Mammary epithelial cell (primary cell): ENCODE measurements at regions of chr11 and their contacts with region 1.

Region 1: GRCh38 chr11:128905345-128906184 is 14.4 kb downstream of the KCNJ5 start:
- DNase-seq: peak; percentile 62
- H3K4me3 ChIP-seq: peak overlapping the region; percentile 33 to 60 (median 55)
- H3K27ac ChIP-seq: no peak overlapping the region
- H3K4me1 ChIP-seq: peaks cover 68% of the 10 kb centered on the region
- H3K27me3 ChIP-seq: no peaks in the 10 kb centered on the region
- CTCF ChIP-seq: peak; percentile 47 to 60

Region 2: GRCh38 chr11:128522055-128522942 is 383.3 kb before region 1 on chr11:
- CTCF ChIA-PET with region 1: no interaction called
- dilution Hi-C with region 1: no loop called
- in situ Hi-C with region 1: no loop called
- intact Hi-C with region 1: no loop called
- DNase-seq: peak; percentile 99
- H3K4me3 ChIP-seq: peak overlapping the region; percentile 85 to 95 (median 87)
- H3K27ac ChIP-seq: peak overlapping the region; percentile 96
- H3K4me1 ChIP-seq: peaks cover 55% of the 10 kb centered on the region
- H3K27me3 ChIP-seq: no peaks in the 10 kb centered on the region
- CTCF ChIP-seq: no peak

Region 3: GRCh38 chr11:128859563-128860441 is 45.8 kb before region 1 on chr11:
- CTCF ChIA-PET with region 1: no interaction called
- dilution Hi-C with region 1: no loop called
- in situ Hi-C with region 1: no loop called
- intact Hi-C with region 1: no loop called
- DNase-seq: peak; percentile 31
- H3K4me3 ChIP-seq: no peak overlapping the region
- H3K27ac ChIP-seq: no peak overlapping the region
- H3K4me1 ChIP-seq: peaks cover 12% of the 10 kb centered on the region
- H3K27me3 ChIP-seq: no peaks in the 10 kb centered on the region
- CTCF ChIP-seq: peak; percentile 78 to 80

Region 4: DNA sequence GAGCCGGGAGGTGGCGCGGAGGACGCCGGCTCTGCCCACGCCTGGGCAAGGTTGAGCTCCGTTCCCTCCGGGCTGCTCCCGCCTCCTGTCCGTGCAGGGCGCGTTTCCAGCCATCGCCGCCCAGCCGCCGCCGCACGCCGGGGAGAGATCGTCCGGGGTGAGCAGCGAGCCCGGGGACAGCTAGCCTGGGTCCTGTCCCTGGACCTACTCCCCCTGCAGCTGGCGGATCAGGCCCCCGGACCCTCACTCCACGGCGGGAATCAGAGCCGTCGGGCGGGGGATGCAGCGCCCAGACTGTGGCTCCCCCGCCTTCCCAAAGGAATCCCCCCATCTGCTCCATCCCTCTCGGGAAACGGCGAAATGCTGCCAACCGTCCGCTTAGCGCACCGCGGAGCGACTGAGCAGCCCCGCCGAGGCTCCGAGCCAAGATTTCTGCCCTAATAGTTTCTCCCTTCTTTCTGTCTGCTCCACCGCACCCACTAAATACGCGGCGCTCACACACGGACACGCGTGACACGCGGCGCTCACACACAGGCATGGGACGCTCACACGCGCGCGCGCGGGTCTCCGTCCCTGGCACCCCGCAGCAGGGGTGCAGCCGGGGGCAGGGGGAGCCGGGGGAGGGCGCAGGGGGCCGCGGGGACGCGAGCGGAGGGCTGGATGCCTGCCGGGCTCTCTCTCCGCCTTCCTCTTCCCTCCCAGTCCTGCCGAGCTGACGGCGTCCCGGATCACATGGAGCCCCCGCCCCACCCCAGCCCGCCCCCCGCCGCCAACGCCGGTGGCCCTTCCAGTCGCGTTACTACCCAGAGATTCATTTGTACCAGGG is 14.8 kb before region 1 on chr11 and contains the start of gene KCNJ5:
- CTCF ChIA-PET with region 1: interaction called, 14 read pairs
- dilution Hi-C with region 1: no loop called
- in situ Hi-C with region 1: no loop called
- intact Hi-C with region 1: loop called (anchors 1 kb)
- DNase-seq: peak; percentile 39
- H3K4me3 ChIP-seq: peak within 1 kb of the TSS; percentile 53 to 68 (median 61)
- H3K27ac ChIP-seq: no peak within 1 kb of the TSS
- H3K4me1 ChIP-seq: peaks cover 48% of the 10 kb centered on the region
- H3K27me3 ChIP-seq: no peaks in the 10 kb centered on the region
- CTCF ChIP-seq: peak in 1 of 2 donors; percentile 19
- total RNA-seq, gene KCNJ5: 1.2 to 63.7 TPM

Region 5: GRCh38 chr11:128942817-128943427 is 37.4 kb after region 1 on chr11 and contains the start of gene TP53AIP1:
- CTCF ChIA-PET with region 1: interaction called, 12 read pairs
- dilution Hi-C with region 1: no loop called
- in situ Hi-C with region 1: no loop called
- intact Hi-C with region 1: loop called (anchors 2 kb)
- DNase-seq: no peak
- H3K4me3 ChIP-seq: no peak within 1 kb of the TSS
- H3K27ac ChIP-seq: peak within 1 kb of the TSS; percentile 69
- H3K4me1 ChIP-seq: peaks cover 38% of the 10 kb centered on the region
- H3K27me3 ChIP-seq: no peaks in the 10 kb centered on the region
- CTCF ChIP-seq: no peak
- total RNA-seq, gene TP53AIP1: 8.2 to 12.0 TPM